ENCODE measurements at regions of chr12 and their contacts with region 1.

Region 1: GRCh38 chr12:65631621-65632111 is 192.6 kb upstream of the HMGA2 start:
- DNase-seq: peak; percentile 99
- H3K4me3 ChIP-seq: no peak overlapping the region
- CTCF ChIP-seq: no peak

Region 2: GRCh38 chr12:65565601-65566560 is 65.8 kb before region 1 on chr12:
- CTCF ChIA-PET with region 1: no interaction called
- POLR2A ChIA-PET with region 1: interaction called, 11 read pairs
- DNase-seq: peak; percentile 98
- H3K4me3 ChIP-seq: peak overlapping the region; percentile 6
- CTCF ChIP-seq: peak; percentile 19

Region 3: DNA sequence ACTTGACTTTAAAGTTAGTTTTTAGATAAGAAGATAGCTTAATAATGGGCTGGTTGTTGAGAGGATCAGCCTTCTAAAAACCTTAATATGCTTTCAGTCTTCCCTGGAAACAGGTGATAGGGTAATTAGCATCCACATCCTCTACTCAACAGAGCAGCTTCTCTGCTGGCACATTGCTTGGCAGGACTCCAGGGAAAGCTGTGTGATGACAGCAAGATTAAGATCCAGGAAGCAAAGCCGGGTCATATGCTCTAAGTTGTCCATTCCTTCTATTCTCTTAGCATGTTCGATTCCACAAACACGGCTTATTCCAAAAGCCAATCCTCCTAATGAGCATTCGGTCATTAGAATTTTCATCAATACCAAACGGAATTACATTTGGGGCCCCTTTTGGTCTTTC is 279.7 kb after region 1 on chr12:
- CTCF ChIA-PET with region 1: no interaction called
- POLR2A ChIA-PET with region 1: no interaction called
- DNase-seq: no peak
- H3K4me3 ChIP-seq: no peak overlapping the region
- CTCF ChIP-seq: no peak